ENCODE measurements at regions of chr13 and their contacts with region 1.

Region 1: GRCh38 chr13:63910511-63910910 is 2494.9 kb upstream of the PCDH20 start:
- DNase-seq: no peak
- ATAC-seq: no peak
- H3K4me3 ChIP-seq: no peak overlapping the region
- H3K27ac ChIP-seq: no peak overlapping the region
- H3K4me1 ChIP-seq: no peaks in the 10 kb centered on the region
- H3K27me3 ChIP-seq: no peaks in the 10 kb centered on the region
- CTCF ChIP-seq: no peak
- POLR2A ChIP-seq: no peak

Region 2: DNA sequence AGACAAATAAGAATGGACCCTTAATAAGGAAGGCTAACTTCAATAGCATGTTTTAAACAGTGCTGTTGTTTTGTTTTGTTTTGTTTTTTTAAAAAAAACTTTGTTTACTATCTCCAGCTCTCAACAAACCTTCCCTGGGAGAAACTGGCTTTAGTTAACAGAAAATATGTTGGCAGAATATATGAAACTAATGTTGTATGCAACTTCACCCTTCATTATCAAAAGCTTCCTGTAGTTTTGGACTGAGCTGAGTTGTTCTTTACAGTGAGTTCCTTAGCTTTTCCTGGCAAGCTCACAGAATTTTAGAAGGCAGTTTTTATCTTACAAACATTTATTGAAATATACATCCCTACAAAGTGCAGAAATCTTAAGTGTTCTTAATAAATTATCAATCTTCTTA is 14.2 kb before region 1 on chr13:
- intact Hi-C with region 1: loop called in 1 of 10 experiments (anchors 1 kb)
- DNase-seq: no peak
- ATAC-seq: no peak
- H3K4me3 ChIP-seq: no peak overlapping the region
- H3K27ac ChIP-seq: no peak overlapping the region
- H3K4me1 ChIP-seq: no peaks in the 10 kb centered on the region
- H3K27me3 ChIP-seq: no peaks in the 10 kb centered on the region
- CTCF ChIP-seq: no peak
- POLR2A ChIP-seq: no peak

Region 3: DNA sequence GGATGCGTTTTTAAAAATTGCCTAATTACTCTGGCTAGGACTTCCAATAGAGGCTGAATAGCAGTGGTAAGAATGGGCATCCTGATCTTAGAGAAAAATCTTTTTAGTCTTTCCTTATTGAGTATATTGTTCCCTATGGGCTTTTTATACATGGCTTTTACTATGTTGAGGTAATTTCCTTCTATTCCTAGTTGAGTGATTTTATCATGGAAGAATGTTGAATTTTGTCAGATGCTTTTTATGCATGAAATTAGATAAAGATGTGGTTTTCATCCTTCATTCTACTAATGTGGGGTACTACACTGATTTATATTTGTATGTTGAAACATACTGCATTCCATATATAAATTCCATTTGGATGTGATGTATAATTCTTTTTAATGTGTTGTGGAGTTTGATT is 645.9 kb after region 1 on chr13:
- intact Hi-C with region 1: no loop called
- DNase-seq: no peak
- ATAC-seq: no peak
- H3K4me3 ChIP-seq: no peak overlapping the region
- H3K27ac ChIP-seq: no peak overlapping the region
- H3K4me1 ChIP-seq: no peaks in the 10 kb centered on the region
- H3K27me3 ChIP-seq: no peaks in the 10 kb centered on the region
- CTCF ChIP-seq: no peak
- POLR2A ChIP-seq: no peak

Measured in heart left ventricle (tissue), 16 donors.